ENCODE measurements at regions of chr3 and their contacts with region 1.

Region 1: GRCh38 chr3:53195602-53196574 is 34.9 kb downstream of the PRKCD start:
- DNase-seq: peak in 1 of 2 donors; percentile 62
- ATAC-seq: peak; percentile 70 to 85 (median 78)
- H3K4me3 ChIP-seq: no peak overlapping the region
- H3K27ac ChIP-seq: peak overlapping the region in 1 of 10 donors; percentile 8
- H3K4me1 ChIP-seq: peaks cover 10 to 46% (median 28%) of the 10 kb centered on the region in 9 donors
- H3K27me3 ChIP-seq: no peaks in the 10 kb centered on the region
- CTCF ChIP-seq: peak; percentile 98 to 100 (median 99)

Region 2: GRCh38 chr3:52851348-52851747 is 344.5 kb before region 1 on chr3:
- intact Hi-C with region 1: loop called in 1 of 10 experiments (anchors 10 kb)
- DNase-seq: no peak
- ATAC-seq: peak in 6 of 8 donors; percentile 42 to 69 (median 50)
- H3K4me3 ChIP-seq: no peak overlapping the region
- H3K27ac ChIP-seq: no peak overlapping the region
- H3K4me1 ChIP-seq: peaks cover 0 to 9% (median 4%) of the 10 kb centered on the region in 9 donors
- H3K27me3 ChIP-seq: no peaks in the 10 kb centered on the region
- CTCF ChIP-seq: peak in 8 of 9 donors; percentile 10 to 63 (median 50)

Region 3: DNA sequence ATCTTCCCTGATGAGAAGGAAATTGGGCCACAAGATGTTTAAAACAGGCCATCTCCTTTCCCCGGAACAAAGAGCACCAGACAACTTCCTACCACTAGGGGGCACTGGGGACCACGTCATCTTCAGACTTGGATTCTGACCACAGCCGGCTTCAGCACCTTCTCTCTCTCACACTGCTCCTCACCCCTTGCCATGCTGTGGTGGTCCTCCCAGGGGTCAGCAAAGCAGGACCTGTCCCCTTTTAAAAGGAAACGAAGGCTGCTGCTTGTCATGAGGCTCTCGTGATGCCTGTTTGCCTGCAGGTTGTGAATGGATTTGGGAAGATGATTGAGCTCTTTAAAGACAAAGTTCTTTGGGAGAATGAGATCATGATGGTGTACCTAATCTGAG is 81.9 kb before region 1 on chr3:
- intact Hi-C with region 1: loop called (anchors 1 to 2 kb)
- DNase-seq: peak; percentile 61 to 88
- ATAC-seq: peak; percentile 70 to 92 (median 84)
- H3K4me3 ChIP-seq: no peak overlapping the region
- H3K27ac ChIP-seq: peak overlapping the region in 9 of 10 donors; percentile 32 to 92 (median 78)
- H3K4me1 ChIP-seq: peaks cover 0 to 43% (median 12%) of the 10 kb centered on the region in 9 donors
- H3K27me3 ChIP-seq: no peaks in the 10 kb centered on the region
- CTCF ChIP-seq: peak; percentile 76 to 96 (median 92)

Region 4: GRCh38 chr3:53130179-53131061 is 65.5 kb before region 1 on chr3 and contains the start of gene RFT1:
- intact Hi-C with region 1: loop called in 9 of 10 experiments (anchors 1 to 5 kb)
- DNase-seq: peak; percentile 98 to 99
- ATAC-seq: peak; percentile 94 to 99 (median 98)
- H3K4me3 ChIP-seq: peak within 1 kb of the TSS; percentile 73 to 96 (median 89)
- H3K27ac ChIP-seq: peak within 1 kb of the TSS; percentile 84 to 98 (median 90)
- H3K4me1 ChIP-seq: peaks cover 6 to 42% (median 23%) of the 10 kb centered on the region in 9 donors
- H3K27me3 ChIP-seq: no peaks in the 10 kb centered on the region
- CTCF ChIP-seq: peak in 4 of 9 donors; percentile 10 to 43 (median 38)
- total RNA-seq, gene RFT1: 5.7 to 13.1 (median 9.5) TPM

Measured in heart right ventricle (tissue), 16 donors.